ENCODE measurements at regions of chr15 and their contacts with region 1.

Region 1: DNA sequence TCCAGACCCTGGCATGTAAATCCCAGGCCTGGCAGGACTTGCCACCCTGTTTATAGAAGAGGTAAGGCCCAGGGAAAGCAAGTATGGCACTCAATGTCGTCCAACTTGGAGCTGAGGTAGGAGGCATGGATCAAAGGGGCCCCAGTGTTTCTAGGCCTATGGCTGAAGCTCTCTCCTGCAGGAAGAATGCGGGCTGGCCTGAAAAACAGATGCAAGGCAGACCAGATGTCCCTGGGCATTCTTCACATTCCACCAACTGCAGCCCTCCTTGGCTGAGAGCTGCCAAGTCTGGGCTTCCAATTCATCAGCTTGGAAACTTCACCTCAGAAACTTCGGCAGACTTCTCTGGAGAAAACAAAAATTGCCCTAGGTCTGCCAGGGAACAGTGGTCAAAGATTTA is 22.2 kb downstream of the MESD start:
- DNase-seq: peak in 1 of 2 donors; percentile 34
- H3K4me3 ChIP-seq: no peak overlapping the region
- CTCF ChIP-seq: no peak
- POLR2A ChIP-seq: no peak

Region 2: DNA sequence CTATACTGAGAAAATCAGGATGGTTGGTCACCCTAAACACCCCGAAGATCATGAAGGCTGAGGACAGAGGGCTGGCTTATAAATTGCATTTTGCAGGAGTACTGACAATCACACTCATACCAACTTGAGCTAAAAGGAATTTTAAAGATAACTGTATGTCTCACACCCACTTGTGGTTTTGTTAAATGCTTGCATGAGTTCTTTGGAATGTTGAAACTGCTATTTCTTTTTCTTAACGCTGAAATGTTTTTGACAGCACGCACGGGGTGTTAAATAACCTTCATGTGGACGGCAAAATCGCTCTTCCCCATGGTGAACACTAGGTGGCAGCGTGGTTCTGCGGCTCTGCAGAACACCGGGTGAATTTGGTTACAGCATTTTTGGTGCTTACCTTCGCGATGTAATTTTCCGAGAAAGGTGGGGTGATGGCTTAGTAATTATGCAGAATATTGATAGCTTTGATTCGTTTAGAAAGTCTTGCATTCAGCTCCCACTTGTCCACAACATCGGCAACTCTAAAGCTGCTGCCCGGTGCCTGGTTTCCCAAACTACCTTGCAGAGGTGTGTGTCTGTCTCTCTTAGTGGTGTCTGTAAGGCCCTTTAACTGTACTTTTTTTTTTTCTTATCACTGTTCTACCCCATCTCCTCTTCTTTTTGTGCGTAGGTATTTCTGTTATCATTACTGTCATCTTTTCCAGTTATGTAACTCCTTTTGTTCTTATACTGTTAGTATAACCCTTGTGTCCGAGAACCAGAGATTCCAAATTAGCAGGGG is 511.6 kb before region 1 on chr15:
- intact Hi-C with region 1: loop called (anchors 5 kb)
- DNase-seq: peak in 1 of 2 donors; percentile 66
- H3K4me3 ChIP-seq: no peak overlapping the region
- CTCF ChIP-seq: peak in 1 of 3 donors; percentile 93
- POLR2A ChIP-seq: no peak

Region 3: GRCh38 chr15:80560601-80561400 is 406.6 kb before region 1 on chr15:
- intact Hi-C with region 1: loop called (anchors 5 kb)
- DNase-seq: no peak
- H3K4me3 ChIP-seq: no peak overlapping the region
- CTCF ChIP-seq: no peak
- POLR2A ChIP-seq: no peak

Region 4: GRCh38 chr15:80856809-80857377 is 110.6 kb before region 1 on chr15:
- intact Hi-C with region 1: no loop called
- DNase-seq: no peak
- H3K4me3 ChIP-seq: no peak overlapping the region
- CTCF ChIP-seq: no peak
- POLR2A ChIP-seq: no peak

Measured in lower leg skin (tissue), 4 donors.